Naive thymus-derived CD4-positive, alpha-beta T cell (primary cell): ENCODE measurements at regions of chrX and their contacts with region 1.

Region 1: GRCh38 chrX:24150051-24150790 is 692 bp downstream of the ZFX start:
- DNase-seq: peak in 8 of 9 donors; percentile 67 to 95 (median 90)
- ATAC-seq: peak; percentile 89
- H3K4me3 ChIP-seq: peak overlapping the region; percentile 84
- H3K4me3 Mint-ChIP-seq: peak overlapping the region; percentile 85 to 97 (median 91)
- H3K27ac ChIP-seq: peak overlapping the region; percentile 98
- H3K27ac Mint-ChIP-seq: peak overlapping the region; percentile 83 to 94 (median 91)
- H3K4me1 ChIP-seq: peaks cover 28% of the 10 kb centered on the region in 2 donors
- H3K4me1 Mint-ChIP-seq: peaks cover 16 to 83% (median 66%) of the 10 kb centered on the region in 7 donors
- H3K27me3 ChIP-seq: no peaks in the 10 kb centered on the region
- H3K27me3 Mint-ChIP-seq: no peaks in the 10 kb centered on the region

Region 2: DNA sequence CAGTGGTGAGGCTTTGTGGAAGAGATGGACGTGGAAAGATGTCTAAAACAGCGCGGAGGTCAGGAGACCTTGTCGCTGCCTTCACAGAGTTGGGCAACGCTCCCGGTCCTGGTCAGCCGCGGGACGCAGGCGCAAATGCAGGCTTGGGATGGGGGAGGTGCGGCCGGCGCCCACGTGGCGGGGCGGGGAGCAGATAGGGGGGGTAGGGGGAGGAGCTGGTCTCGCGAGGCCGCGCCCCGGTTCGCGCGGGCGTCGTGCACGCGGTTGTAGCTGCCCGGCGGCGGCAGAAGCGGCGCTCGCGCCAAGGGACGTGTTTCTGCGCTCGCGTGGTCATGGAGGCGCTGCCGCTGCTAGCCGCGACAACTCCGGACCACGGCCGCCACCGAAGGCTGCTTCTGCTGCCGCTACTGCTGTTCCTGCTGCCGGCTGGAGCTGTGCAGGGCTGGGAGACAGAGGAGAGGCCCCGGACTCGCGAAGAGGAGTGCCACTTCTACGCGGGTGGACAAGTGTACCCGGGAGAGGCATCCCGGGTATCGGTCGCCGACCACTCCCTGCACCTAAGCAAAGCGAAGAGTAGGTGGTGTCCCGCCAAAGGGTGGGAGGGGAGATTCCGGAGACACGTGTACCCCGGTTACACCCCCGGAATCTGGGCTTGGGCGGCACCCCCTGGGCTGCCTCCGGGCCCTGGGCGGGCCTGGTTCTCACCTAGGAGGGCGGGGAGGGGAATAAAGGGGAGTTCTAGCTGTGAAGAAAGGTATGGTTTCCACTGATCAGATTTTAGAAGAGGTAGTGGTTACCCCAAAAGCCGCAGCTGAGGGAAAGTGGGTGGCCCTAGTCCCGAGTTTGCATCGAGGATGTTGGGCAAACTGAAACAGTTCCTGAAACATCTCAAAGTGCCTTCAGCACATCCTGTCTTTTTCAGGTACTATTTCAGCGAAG is 482.7 kb before region 1 on chrX and contains the start of gene PRDX4:
- CTCF ChIA-PET with region 1: no interaction called
- POLR2A ChIA-PET with region 1: no interaction called
- intact Hi-C with region 1: loop called (anchors 1 to 2 kb)
- DNase-seq: peak; percentile 42 to 79 (median 57)
- ATAC-seq: peak; percentile 96
- H3K4me3 ChIP-seq: peak within 1 kb of the TSS; percentile 73
- H3K4me3 Mint-ChIP-seq: peak within 1 kb of the TSS; percentile 80 to 94 (median 92)
- H3K27ac ChIP-seq: peak within 1 kb of the TSS; percentile 85
- H3K27ac Mint-ChIP-seq: peak within 1 kb of the TSS; percentile 71 to 97 (median 89)
- H3K4me1 ChIP-seq: peaks cover 10 to 12% of the 10 kb centered on the region in 2 donors
- H3K4me1 Mint-ChIP-seq: peaks cover 6 to 29% (median 23%) of the 10 kb centered on the region in 7 donors
- H3K27me3 ChIP-seq: no peaks in the 10 kb centered on the region
- H3K27me3 Mint-ChIP-seq: no peaks in the 10 kb centered on the region
- total RNA-seq, gene PRDX4: 8.0 to 33.3 (median 12.1) TPM

Region 3: DNA sequence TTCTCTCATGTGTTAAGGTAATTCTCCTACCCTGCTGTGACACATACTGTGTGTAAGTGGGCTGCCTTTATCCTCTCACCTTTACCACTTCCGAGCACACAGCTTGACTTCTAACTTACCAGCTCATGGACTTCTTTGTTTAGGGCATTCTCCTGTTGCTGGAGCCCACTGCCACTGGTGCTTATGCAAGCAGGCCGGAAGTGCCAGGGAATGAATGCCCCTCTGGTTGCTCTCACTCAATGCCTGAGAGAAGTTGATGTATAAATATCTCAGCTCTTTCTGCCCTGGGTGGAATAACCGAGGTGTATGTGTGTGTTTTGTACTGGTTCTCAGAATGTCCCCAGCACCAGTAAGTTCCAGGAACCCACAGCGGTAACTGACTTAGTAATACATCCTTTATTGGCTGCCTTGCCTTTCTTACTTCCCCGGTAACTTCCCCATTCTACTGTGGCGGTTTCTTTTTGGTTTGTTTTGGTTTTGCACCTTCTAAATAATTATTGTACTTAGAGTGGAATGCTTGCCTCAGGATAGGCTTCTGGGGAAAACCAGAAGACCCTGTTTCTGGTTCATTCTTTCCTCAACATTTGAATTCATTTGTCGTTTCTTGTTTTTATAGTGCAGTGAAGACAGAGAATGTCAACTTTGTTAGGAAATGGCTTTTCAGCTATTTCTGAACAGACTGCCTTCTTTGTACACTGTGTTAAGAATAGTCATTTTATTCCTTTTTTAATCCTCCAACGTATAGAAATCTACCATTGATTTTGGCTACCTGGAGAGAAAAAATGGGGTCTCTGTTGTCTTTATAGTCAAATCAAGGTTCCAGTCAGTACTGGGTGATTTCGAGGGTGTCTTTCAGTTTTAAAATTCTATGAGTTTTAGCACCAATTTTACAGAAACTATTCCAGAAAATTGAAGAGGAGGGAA is 197.0 kb before region 1 on chrX:
- CTCF ChIA-PET with region 1: no interaction called
- POLR2A ChIA-PET with region 1: no interaction called
- intact Hi-C with region 1: loop called in 1 of 2 experiments (anchors 5 kb)
- DNase-seq: peak in 8 of 9 donors; percentile 31 to 63 (median 46)
- ATAC-seq: peak; percentile 93
- H3K4me3 ChIP-seq: peak overlapping the region; percentile 84
- H3K4me3 Mint-ChIP-seq: peak overlapping the region; percentile 72 to 97 (median 88)
- H3K27ac ChIP-seq: peak overlapping the region; percentile 80
- H3K27ac Mint-ChIP-seq: peak overlapping the region; percentile 78 to 99 (median 91)
- H3K4me1 ChIP-seq: peaks cover 0 to 12% of the 10 kb centered on the region in 2 donors
- H3K4me1 Mint-ChIP-seq: peaks cover 7 to 55% (median 20%) of the 10 kb centered on the region in 7 donors
- H3K27me3 ChIP-seq: no peaks in the 10 kb centered on the region
- H3K27me3 Mint-ChIP-seq: no peaks in the 10 kb centered on the region

Region 4: GRCh38 chrX:24054182-24055042 is 95.8 kb before region 1 on chrX and contains the start of gene EIF2S3:
- CTCF ChIA-PET with region 1: interaction called, 4 read pairs
- POLR2A ChIA-PET with region 1: interaction called, 15 read pairs
- intact Hi-C with region 1: loop called (anchors 1 kb)
- DNase-seq: peak; percentile 75 to 97 (median 93)
- ATAC-seq: peak; percentile 90
- H3K4me3 ChIP-seq: peak within 1 kb of the TSS; percentile 68
- H3K4me3 Mint-ChIP-seq: peak within 1 kb of the TSS in 2 of 10 donors; percentile 96 to 99
- H3K27ac ChIP-seq: no peak within 1 kb of the TSS
- H3K27ac Mint-ChIP-seq: peak within 1 kb of the TSS in 5 of 9 donors; percentile 97 to 100 (median 99)
- H3K4me1 ChIP-seq: peaks cover 0 to 6% of the 10 kb centered on the region in 2 donors
- H3K4me1 Mint-ChIP-seq: peaks cover 0 to 25% (median 4%) of the 10 kb centered on the region in 7 donors
- H3K27me3 ChIP-seq: no peaks in the 10 kb centered on the region
- H3K27me3 Mint-ChIP-seq: no peaks in the 10 kb centered on the region
- total RNA-seq, gene EIF2S3: 174 to 270 (median 226) TPM

Region 5: DNA sequence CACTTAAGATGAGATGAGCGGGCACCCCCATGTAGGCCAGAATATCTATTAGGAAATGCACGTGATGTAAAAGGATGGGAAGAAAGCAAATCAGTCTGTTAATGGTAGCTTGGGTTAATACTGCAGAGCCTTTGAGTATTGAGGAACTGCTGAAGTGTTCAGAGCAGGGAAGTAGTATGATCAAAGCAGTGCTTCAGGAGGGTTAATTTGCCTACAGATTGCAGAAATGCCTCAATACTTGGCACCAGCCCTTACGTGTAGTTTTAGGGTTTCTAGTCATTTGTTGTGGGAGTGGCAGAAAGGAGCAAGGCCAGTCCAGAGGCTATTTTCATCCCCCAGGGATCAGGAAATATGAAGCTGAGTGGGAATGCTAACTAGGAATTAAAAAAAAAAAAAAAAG is 19.0 kb after region 1 on chrX:
- CTCF ChIA-PET with region 1: no interaction called
- POLR2A ChIA-PET with region 1: no interaction called
- intact Hi-C with region 1: loop called (anchors 2 kb)
- DNase-seq: no peak
- ATAC-seq: peak; percentile 61
- H3K4me3 ChIP-seq: no peak overlapping the region
- H3K4me3 Mint-ChIP-seq: peak overlapping the region; percentile 12 to 69 (median 41)
- H3K27ac ChIP-seq: peak overlapping the region; percentile 40
- H3K27ac Mint-ChIP-seq: peak overlapping the region; percentile 24 to 88 (median 60)
- H3K4me1 ChIP-seq: peaks cover 0 to 11% of the 10 kb centered on the region in 2 donors
- H3K4me1 Mint-ChIP-seq: peaks cover 35 to 84% (median 56%) of the 10 kb centered on the region in 7 donors
- H3K27me3 ChIP-seq: no peaks in the 10 kb centered on the region
- H3K27me3 Mint-ChIP-seq: no peaks in the 10 kb centered on the region

Region 6: GRCh38 chrX:24241822-24242648 is 91.8 kb after region 1 on chrX:
- CTCF ChIA-PET with region 1: no interaction called
- POLR2A ChIA-PET with region 1: no interaction called
- intact Hi-C with region 1: loop called in 1 of 2 experiments (anchors 1 kb)
- DNase-seq: peak in 5 of 9 donors; percentile 4 to 41 (median 28)
- ATAC-seq: peak; percentile 38
- H3K4me3 ChIP-seq: no peak overlapping the region
- H3K4me3 Mint-ChIP-seq: no peak overlapping the region
- H3K27ac ChIP-seq: no peak overlapping the region
- H3K27ac Mint-ChIP-seq: peak overlapping the region in 1 of 9 donors; percentile 8
- H3K4me1 ChIP-seq: no peaks in the 10 kb centered on the region
- H3K4me1 Mint-ChIP-seq: peaks cover 0 to 4% (median 0%) of the 10 kb centered on the region in 7 donors
- H3K27me3 ChIP-seq: no peaks in the 10 kb centered on the region
- H3K27me3 Mint-ChIP-seq: peaks cover 0 to 2% (median 0%) of the 10 kb centered on the region in 5 donors

Region 7: DNA sequence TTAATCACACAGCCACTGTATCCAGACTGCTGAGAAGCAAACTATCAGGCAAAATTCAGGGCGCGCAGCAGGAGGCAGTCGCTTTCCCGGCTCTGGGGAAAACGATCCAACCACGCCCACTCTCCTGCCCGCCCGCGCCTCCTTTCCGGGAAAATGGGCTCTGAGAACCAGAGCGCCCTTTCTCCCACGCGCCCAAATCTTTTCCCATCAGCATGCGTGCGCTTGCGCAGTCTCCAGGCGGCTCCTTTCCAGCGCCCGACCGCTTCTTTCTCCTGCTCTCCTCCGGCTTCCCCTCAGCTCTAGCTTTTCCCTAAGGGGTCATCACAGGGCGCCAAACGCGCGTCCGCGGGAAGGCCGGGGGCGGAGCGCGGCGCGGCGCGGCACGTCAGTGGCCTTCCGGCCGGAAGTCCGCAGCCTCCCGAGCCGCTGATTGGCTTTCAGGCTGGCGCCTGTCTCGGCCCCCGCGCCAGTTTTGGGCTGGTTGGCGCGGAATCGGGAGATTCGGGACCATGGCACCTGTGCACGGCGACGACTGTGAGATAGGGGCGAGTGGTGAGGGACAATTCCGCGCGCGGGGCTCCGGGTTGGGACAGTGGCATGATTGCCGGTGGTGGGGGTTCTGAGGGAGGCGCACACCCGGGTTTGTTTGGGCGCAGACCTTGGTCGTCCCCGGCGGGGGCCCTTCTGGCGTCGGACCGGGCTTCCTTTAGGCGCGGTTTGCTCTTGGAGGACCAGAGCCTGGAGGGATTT is 543.4 kb after region 1 on chrX and contains the start of gene POLA1:
- CTCF ChIA-PET with region 1: no interaction called
- POLR2A ChIA-PET with region 1: no interaction called
- intact Hi-C with region 1: loop called in 1 of 2 experiments (anchors 1 kb)
- DNase-seq: peak; percentile 33 to 81 (median 41)
- ATAC-seq: peak; percentile 97
- H3K4me3 ChIP-seq: peak within 1 kb of the TSS; percentile 78
- H3K4me3 Mint-ChIP-seq: peak within 1 kb of the TSS; percentile 85 to 94 (median 89)
- H3K27ac ChIP-seq: peak within 1 kb of the TSS; percentile 52
- H3K27ac Mint-ChIP-seq: peak within 1 kb of the TSS; percentile 28 to 95 (median 77)
- H3K4me1 ChIP-seq: no peaks in the 10 kb centered on the region
- H3K4me1 Mint-ChIP-seq: peaks cover 0 to 24% (median 13%) of the 10 kb centered on the region in 7 donors
- H3K27me3 ChIP-seq: no peaks in the 10 kb centered on the region
- H3K27me3 Mint-ChIP-seq: no peaks in the 10 kb centered on the region
- total RNA-seq, gene POLA1: 6.4 to 26.6 (median 7.5) TPM